ENCODE measurements at regions of chr12 and their contacts with region 1.

Region 1: GRCh38 chr12:1795785-1796514 is 24.4 kb upstream of the LRTM2 start:
- DNase-seq: peak; percentile 86 to 91
- H3K4me3 ChIP-seq: peak overlapping the region; percentile 60 to 87 (median 65)
- H3K27ac ChIP-seq: peak overlapping the region; percentile 68 to 91
- H3K4me1 ChIP-seq: peaks cover 4 to 6% of the 10 kb centered on the region in 2 donors
- H3K27me3 ChIP-seq: no peaks in the 10 kb centered on the region
- CTCF ChIP-seq: peak; percentile 75 to 98 (median 92)
- POLR2A ChIP-seq: peak; percentile 39

Region 2: DNA sequence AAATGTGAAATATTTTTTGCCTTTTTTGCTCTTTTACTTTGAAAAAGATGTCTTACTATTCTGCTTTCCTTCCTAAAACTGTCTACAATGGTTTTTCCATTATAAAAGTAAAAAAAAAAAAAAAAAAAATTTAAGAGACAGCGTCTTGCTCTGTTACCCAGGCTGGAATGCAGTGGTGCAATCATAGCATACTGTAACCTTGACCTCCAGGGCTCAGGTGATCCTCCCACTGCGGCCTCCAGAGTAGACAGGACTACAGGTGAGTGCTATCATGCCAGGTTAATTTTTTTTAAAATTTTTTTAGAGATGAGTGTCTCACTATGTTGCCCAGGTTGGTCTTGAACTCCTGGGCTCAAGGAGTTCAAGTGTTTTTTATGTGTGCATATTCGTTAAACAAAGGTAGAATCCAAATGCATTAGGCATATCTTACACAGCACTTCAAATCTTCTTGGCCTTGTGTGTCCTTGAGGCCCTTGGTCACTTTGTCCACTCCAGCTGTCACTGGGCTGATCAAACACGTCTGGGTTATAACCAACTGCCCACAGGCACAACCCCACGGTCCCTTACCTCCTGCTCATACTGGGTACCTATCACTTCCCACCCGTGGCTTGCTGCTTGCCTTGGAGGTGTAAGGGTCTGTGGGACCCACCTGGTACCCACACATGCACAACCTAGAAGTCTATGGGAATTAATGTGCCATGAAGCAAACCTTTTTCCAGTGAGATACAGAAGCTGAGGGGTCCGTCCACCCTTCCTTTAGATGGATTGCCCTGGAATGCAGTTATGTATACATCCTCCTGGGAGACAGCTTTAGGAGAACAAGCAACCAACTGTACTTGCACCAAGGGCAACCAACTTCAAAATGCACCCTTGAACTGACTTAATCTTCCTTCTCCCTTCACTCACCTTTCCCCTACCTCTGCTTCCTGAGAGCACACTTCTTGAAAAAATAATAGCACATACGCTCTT is 859.3 kb before region 1 on chr12:
- intact Hi-C with region 1: no loop called
- DNase-seq: no peak
- H3K4me3 ChIP-seq: no peak overlapping the region
- H3K27ac ChIP-seq: no peak overlapping the region
- H3K4me1 ChIP-seq: no peaks in the 10 kb centered on the region
- H3K27me3 ChIP-seq: no peaks in the 10 kb centered on the region
- CTCF ChIP-seq: no peak
- POLR2A ChIP-seq: no peak

Region 3: GRCh38 chr12:1302201-1302870 is 493.6 kb before region 1 on chr12:
- intact Hi-C with region 1: loop called (anchors 5 kb)
- DNase-seq: no peak
- H3K4me3 ChIP-seq: no peak overlapping the region
- H3K27ac ChIP-seq: no peak overlapping the region
- H3K4me1 ChIP-seq: no peaks in the 10 kb centered on the region
- H3K27me3 ChIP-seq: no peaks in the 10 kb centered on the region
- CTCF ChIP-seq: no peak
- POLR2A ChIP-seq: no peak

Region 4: DNA sequence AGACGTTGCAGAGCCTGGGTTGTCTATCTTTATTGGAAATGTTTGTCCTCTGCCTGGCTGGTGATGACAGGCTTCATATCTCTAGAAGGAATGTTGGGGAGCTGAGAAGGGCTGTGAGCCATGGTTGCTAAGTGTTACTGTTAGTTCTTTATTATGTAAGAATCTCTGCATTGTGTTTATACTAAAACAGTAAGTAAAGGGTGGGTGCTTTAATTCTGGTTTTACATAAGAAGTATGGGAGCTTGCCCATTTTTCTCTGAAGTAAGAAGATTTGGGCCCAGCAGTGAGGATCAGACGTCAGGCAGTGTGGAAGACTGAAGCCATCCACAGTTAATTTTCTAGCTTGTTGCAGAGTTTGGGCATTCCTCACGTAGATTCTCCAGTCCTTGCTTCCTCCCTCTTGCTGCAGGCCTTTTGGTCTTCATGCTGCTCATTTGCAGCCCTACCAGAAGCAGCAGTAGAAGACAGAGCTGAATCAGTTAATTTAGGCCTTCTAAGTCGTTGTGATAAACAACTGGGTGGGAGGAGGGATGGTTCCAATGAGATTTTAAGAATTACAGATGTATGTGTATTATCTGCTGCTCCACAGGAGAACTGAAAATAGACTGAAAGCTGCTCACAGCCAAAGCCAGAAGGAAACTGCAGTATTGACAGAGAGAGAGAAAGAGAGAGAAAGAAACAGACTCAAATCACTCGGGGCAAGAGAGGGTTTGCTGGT is 145.5 kb before region 1 on chr12:
- intact Hi-C with region 1: loop called (anchors 5 kb)
- DNase-seq: no peak
- H3K4me3 ChIP-seq: no peak overlapping the region
- H3K27ac ChIP-seq: peak overlapping the region in 1 of 2 donors; percentile 38
- H3K4me1 ChIP-seq: no peaks in the 10 kb centered on the region
- H3K27me3 ChIP-seq: no peaks in the 10 kb centered on the region
- CTCF ChIP-seq: no peak
- POLR2A ChIP-seq: no peak

Region 5: DNA sequence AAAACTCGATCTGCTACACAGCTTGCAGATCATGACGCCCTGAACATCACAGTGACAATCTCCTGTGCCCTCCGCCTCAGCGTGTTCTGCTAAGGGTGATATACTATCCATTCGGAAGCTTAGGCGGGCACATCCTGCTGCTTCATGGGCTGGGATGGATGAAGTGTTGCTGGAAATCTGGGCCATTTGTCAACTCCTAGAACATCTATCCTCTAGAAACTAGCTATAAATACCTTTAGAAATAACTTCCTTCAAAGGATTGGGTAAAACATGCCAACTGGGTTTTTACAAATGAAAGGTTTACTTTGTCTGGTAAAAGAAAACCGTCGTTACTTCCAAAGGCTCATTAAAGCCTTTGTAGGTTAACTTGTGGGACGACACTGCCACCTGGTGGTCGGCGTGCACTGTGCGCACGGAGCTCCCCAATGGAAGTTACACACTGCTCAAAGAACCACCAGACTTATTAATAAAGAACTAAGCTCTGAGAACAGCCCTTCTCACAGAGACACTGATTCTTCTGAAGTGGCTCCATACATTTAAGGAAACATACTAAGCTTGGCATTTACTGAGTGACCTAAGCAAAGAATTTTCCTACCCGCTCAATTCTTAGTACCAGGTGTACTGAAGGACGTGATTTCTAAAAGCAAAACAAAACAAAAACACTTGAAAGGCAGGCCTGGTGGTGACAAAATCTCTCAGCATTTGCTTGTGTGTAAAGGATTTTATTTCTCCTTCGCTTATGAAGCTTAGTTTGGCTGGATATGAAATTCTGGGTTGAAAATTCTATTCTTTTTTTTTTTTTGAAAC is 144.1 kb after region 1 on chr12:
- intact Hi-C with region 1: loop called (anchors 5 kb)
- DNase-seq: peak; percentile 78 to 89
- H3K4me3 ChIP-seq: no peak overlapping the region
- H3K27ac ChIP-seq: peak overlapping the region in 1 of 2 donors; percentile 6
- H3K4me1 ChIP-seq: no peaks in the 10 kb centered on the region
- H3K27me3 ChIP-seq: no peaks in the 10 kb centered on the region
- CTCF ChIP-seq: peak; percentile 95 to 98 (median 97)
- POLR2A ChIP-seq: no peak

Measured in breast epithelium (tissue), 4 donors.